ENCODE measurements at regions of chr2 and their contacts with region 1.

Region 1: DNA sequence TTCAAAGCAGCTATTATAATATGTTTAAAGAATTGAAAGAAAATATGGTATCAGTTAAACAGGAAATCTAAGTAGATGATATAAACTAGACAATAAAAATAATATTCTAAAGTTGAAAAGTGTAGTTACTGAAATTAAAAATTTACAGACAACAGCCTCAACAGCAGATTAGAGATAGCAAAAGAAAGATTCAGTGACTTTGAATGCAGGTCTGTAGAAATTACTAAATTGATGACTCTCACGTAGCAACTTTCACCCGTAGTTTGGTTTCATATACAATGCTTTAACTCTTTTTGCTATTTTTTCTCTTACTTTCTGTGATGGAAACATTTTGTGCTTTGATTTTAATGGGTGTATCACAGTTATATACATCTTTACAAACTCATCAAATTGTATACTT is 44.8 kb downstream of the SPAST start:
- DNase-seq: no peak
- H3K4me3 ChIP-seq: no peak overlapping the region
- H3K27ac ChIP-seq: no peak overlapping the region
- H3K4me1 ChIP-seq: no peaks in the 10 kb centered on the region
- H3K27me3 ChIP-seq: no peaks in the 10 kb centered on the region
- CTCF ChIP-seq: no peak

Region 2: GRCh38 chr2:32159678-32160077 is 51.6 kb after region 1 on chr2:
- CTCF ChIA-PET with region 1: no interaction called
- dilution Hi-C with region 1: loop called (anchors 5 kb)
- in situ Hi-C with region 1: no loop called
- intact Hi-C with region 1: no loop called
- DNase-seq: no peak
- H3K4me3 ChIP-seq: no peak overlapping the region
- H3K27ac ChIP-seq: no peak overlapping the region
- H3K4me1 ChIP-seq: no peaks in the 10 kb centered on the region
- H3K27me3 ChIP-seq: no peaks in the 10 kb centered on the region
- CTCF ChIP-seq: no peak

Region 3: GRCh38 chr2:32172870-32173269 is 64.8 kb after region 1 on chr2:
- CTCF ChIA-PET with region 1: no interaction called
- dilution Hi-C with region 1: no loop called
- in situ Hi-C with region 1: no loop called
- intact Hi-C with region 1: no loop called
- DNase-seq: no peak
- H3K4me3 ChIP-seq: no peak overlapping the region
- H3K27ac ChIP-seq: no peak overlapping the region
- H3K4me1 ChIP-seq: no peaks in the 10 kb centered on the region
- H3K27me3 ChIP-seq: no peaks in the 10 kb centered on the region
- CTCF ChIP-seq: no peak

Region 4: GRCh38 chr2:32363597-32363996 is 255.5 kb after region 1 on chr2:
- CTCF ChIA-PET with region 1: no interaction called
- dilution Hi-C with region 1: no loop called
- in situ Hi-C with region 1: no loop called
- intact Hi-C with region 1: no loop called
- DNase-seq: no peak
- H3K4me3 ChIP-seq: no peak overlapping the region
- H3K27ac ChIP-seq: no peak overlapping the region
- H3K4me1 ChIP-seq: peaks cover 8% of the 10 kb centered on the region
- H3K27me3 ChIP-seq: no peaks in the 10 kb centered on the region
- CTCF ChIP-seq: no peak

Measured in mammary epithelial cell (primary cell).